IMR-90 (cell line): ENCODE measurements at regions of chr2 and their contacts with region 1.

Region 1: DNA sequence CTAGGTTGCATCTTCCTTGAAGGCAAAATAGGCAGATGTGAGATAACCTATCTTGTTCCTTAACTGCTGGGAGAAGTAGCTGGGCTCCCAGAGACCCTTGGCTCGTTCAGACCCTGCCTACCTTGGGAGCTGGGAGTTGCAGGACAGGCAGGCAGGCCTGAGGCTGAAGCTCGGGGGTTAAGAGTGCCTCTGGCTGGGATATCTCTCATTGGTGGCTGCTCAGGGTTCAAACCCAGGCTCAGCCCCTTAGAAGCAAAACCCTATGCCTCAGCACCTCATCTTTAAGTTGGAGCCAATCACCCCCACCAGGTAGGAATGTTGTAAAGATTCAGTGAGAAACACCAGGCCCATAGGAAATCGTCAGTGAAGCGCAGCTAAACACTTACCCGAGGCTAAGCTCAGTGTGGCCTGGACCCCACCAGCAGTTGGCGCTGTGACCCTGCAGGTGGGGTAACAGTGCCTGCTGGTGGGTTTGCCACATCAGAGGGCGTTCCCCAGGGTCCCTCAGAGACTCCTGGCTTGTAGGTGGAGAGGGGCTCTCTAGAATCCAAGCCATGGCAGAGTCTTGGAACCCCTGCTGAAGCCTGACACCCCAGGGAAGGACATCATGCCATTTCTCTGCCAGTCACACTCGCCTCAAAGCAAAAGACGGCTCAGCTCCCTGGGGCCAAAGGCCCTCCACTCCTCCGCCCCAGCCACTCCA is 54.6 kb upstream of the GPR17 start:
- DNase-seq: peak; percentile 51
- ATAC-seq: peak; percentile 99
- H3K4me3 ChIP-seq: no peak overlapping the region
- H3K27ac ChIP-seq: no peak overlapping the region
- H3K4me1 ChIP-seq: no peaks in the 10 kb centered on the region
- H3K27me3 ChIP-seq: peaks cover 7% of the 10 kb centered on the region
- CTCF ChIP-seq: peak; percentile 92
- POLR2A ChIP-seq: no peak
- RAD21 ChIP-seq: peak; percentile 95

Region 2: DNA sequence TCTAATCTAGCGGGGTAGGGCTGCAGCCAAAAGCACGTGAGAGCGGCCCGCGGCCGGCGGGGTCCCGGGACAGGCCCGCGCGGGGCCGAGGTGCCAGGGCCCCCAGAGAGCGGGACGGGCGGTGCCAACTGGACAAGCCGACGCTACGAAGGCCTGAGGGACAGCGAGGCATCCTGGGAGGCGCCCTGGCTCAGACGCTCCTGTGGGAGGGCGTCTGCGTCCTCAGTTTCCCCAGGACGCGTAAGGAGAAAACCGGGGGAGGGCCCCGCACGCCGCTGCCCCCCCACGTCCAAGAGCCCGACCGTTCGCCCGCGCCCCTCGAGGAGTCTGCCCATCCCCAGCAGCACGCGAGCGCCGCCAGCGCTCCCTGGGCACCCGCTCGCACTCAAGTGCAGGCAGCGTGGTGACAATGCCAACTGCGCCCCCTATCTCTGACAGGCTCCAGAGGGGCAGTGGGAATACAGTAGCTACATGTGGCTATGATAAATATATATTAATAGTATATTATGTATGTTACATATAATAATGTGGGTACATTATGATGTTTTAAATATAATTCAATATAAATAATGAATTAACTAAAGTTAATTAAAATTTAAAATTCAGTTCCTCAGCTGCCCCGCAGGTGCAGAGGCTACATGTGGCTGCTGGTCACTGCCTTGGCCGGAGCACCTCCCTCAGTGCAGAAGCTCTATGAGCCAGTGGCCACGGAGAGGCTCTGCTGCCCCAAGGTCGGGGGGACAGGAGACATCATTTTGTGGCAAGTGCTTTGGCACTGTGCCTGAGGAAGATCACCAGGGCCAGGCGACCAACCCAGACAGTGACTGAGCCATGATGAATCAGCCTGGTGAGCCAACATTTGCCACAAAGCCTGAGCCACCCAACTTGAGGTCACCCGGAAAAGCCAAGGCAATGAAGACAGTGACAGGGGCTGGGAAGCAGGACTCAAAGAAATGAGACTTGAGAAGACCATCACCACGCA is 104.4 kb after region 1 on chr2:
- CTCF ChIA-PET with region 1: no interaction called
- POLR2A ChIA-PET with region 1: no interaction called
- dilution Hi-C with region 1: no loop called
- in situ Hi-C with region 1: no loop called
- intact Hi-C with region 1: loop called (anchors 1 kb)
- DNase-seq: peak; percentile 40
- ATAC-seq: peak; percentile 94
- H3K4me3 ChIP-seq: peak overlapping the region; percentile 33
- H3K27ac ChIP-seq: no peak overlapping the region
- H3K4me1 ChIP-seq: 0 out of 2 replicates have a peak, but pooled peaks cover 2% of the 10 kb centered on the region
- H3K27me3 ChIP-seq: no peaks in the 10 kb centered on the region
- CTCF ChIP-seq: peak; percentile 50
- POLR2A ChIP-seq: no peak
- RAD21 ChIP-seq: peak; percentile 43; the same call in 1 of the 2 replicates

Region 3: GRCh38 chr2:127790694-127791529 is 199.5 kb after region 1 on chr2:
- CTCF ChIA-PET with region 1: no interaction called
- POLR2A ChIA-PET with region 1: interaction called, 11 read pairs
- dilution Hi-C with region 1: no loop called
- in situ Hi-C with region 1: no loop called
- intact Hi-C with region 1: no loop called
- DNase-seq: no peak
- ATAC-seq: no peak
- H3K4me3 ChIP-seq: no peak overlapping the region
- H3K27ac ChIP-seq: no peak overlapping the region
- H3K4me1 ChIP-seq: no peaks in the 10 kb centered on the region
- H3K27me3 ChIP-seq: no peaks in the 10 kb centered on the region
- CTCF ChIP-seq: no peak
- POLR2A ChIP-seq: no peak
- RAD21 ChIP-seq: no peak